Ovary (tissue), 10 donors: ENCODE measurements at regions of chr17 and their contacts with region 1.

Region 1: DNA sequence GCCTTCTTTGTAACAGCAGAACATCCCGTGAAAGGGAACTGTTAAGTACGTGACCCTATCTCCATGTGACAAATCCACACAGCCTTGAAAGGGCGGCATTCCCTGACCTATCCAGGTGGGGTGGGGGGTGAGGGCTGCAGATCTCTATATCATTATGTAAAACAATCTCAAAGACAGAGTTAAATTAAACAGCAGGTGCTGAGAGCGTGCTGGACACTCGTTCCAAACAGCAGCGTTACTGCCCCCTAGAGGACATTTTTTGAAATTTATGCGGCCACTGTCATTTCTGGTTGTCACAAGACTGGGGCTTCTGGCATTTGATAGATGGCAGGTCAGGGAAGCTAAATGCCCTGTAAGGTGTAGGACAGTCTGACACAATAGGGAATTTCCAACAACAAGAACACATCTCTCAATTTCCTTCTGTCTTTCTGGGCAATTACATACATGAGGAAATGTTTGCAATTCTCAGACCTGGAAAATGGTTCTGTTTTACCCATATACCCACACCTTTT is 6.7 kb upstream of the SLC25A39 start:
- DNase-seq: peak in 3 of 5 donors; percentile 47 to 75 (median 56)
- H3K4me3 ChIP-seq: no peak overlapping the region
- H3K27ac ChIP-seq: no peak overlapping the region
- H3K4me1 ChIP-seq: peaks cover 1% of the 10 kb centered on the region
- H3K27me3 ChIP-seq: no peaks in the 10 kb centered on the region
- CTCF ChIP-seq: peak; percentile 65 to 80 (median 69)
- EP300 ChIP-seq: no peak
- POLR2A ChIP-seq: no peak

Region 2: GRCh38 chr17:44210342-44211192 is 120.7 kb before region 1 on chr17:
- intact Hi-C with region 1: loop called in 2 of 4 experiments (anchors 2 to 5 kb)
- DNase-seq: peak; percentile 82 to 93 (median 88)
- H3K4me3 ChIP-seq: no peak overlapping the region
- H3K27ac ChIP-seq: peak overlapping the region in 1 of 2 donors; percentile 7
- H3K4me1 ChIP-seq: peaks cover 4% of the 10 kb centered on the region
- H3K27me3 ChIP-seq: no peaks in the 10 kb centered on the region
- CTCF ChIP-seq: peak; percentile 96 to 99 (median 99)
- EP300 ChIP-seq: no peak
- POLR2A ChIP-seq: peak; percentile 23

Region 3: DNA sequence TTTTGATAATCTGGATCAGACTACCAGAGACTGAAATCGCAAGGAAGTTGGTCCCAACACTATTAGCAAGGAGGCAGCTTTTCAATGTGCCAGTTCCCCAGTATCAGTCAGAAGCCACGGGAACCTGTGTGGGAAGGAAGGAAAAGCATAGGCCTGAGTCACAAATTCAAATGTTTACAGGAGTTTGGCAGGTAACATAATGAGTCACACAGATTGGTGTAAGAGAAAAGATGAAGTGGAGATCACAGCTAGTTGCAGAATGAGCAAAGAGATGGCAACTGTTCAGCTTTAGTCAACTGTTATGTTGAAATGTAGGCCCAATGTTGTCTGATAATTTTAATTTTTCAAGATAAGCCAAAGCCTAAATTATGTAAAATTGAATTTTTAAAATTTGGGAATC is 86.2 kb after region 1 on chr17:
- intact Hi-C with region 1: no loop called
- DNase-seq: no peak
- H3K4me3 ChIP-seq: no peak overlapping the region
- H3K27ac ChIP-seq: no peak overlapping the region
- H3K4me1 ChIP-seq: no peaks in the 10 kb centered on the region
- H3K27me3 ChIP-seq: no peaks in the 10 kb centered on the region
- CTCF ChIP-seq: no peak
- EP300 ChIP-seq: no peak
- POLR2A ChIP-seq: no peak